K562 (cell line): ENCODE measurements at regions of chr3 and their contacts with region 1.

Region 1: DNA sequence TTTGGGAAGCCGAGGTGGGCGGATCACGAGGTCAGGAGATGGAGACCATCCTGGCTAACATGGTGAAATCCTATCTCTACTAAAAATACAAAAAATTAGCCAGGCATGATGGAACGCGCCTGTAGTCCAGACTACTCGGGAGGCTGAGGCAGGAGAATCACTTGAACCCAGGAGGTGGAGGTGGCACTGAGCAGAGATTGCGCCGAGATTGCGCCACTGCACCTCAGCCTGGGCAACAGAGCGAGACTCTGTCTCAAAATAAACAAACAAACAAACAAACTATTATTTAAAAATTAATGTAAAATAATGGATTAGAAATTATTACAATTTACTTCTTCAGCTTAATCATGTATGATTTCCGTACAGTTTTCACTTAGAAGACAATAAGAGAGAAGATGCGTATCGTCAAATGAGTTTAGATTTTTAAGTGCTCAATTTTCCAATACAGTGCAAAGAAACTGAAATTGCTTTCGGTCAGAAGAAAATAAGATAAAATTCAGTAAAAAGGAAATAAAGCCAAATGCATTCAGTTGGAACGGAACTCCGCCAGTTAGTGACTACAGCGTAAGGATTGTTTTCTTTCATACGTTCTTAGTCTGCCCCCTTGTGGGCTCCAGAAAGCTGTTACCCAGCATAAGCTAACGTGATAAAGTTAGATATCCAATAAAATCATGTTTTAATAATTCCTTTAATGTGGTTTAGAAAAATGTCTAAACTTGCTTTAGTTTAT is 24.8 kb downstream of the AADAC start:
- DNase-seq: peak; percentile 43 to 85 (median 50)
- ATAC-seq: peak; percentile 87
- H3K4me3 ChIP-seq: no peak overlapping the region
- H3K27ac ChIP-seq: no peak overlapping the region
- H3K4me1 ChIP-seq: peaks cover 0 to 16% of the 10 kb centered on the region in 2 experiments; a peak in 3 of 5 replicates
- H3K27me3 ChIP-seq: no peaks in the 10 kb centered on the region
- CTCF ChIP-seq: peak; percentile 57 to 85 (median 70); a peak in 5 of 6 replicates
- EP300 ChIP-seq: no peak
- POLR2A ChIP-seq: no peak
- RAD21 ChIP-seq: peak; percentile 91 to 95

Region 2: GRCh38 chr3:151168269-151169094 is 670.3 kb before region 1 on chr3:
- CTCF ChIA-PET with region 1: interaction called, 3 read pairs
- POLR2A ChIA-PET with region 1: no interaction called
- in situ Hi-C with region 1: no loop called
- intact Hi-C with region 1: loop called (anchors 2 kb)
- DNase-seq: peak; percentile 42 to 71 (median 52)
- ATAC-seq: peak; percentile 92
- H3K4me3 ChIP-seq: no peak overlapping the region
- H3K27ac ChIP-seq: no peak overlapping the region
- H3K4me1 ChIP-seq: no peaks in the 10 kb centered on the region
- H3K27me3 ChIP-seq: peaks cover 8 to 10% of the 10 kb centered on the region in 2 experiments; a peak in 3 of 5 replicates
- CTCF ChIP-seq: peak; percentile 76 to 79 (median 76)
- EP300 ChIP-seq: no peak
- POLR2A ChIP-seq: no peak
- RAD21 ChIP-seq: peak; percentile 69 to 80

Region 3: DNA sequence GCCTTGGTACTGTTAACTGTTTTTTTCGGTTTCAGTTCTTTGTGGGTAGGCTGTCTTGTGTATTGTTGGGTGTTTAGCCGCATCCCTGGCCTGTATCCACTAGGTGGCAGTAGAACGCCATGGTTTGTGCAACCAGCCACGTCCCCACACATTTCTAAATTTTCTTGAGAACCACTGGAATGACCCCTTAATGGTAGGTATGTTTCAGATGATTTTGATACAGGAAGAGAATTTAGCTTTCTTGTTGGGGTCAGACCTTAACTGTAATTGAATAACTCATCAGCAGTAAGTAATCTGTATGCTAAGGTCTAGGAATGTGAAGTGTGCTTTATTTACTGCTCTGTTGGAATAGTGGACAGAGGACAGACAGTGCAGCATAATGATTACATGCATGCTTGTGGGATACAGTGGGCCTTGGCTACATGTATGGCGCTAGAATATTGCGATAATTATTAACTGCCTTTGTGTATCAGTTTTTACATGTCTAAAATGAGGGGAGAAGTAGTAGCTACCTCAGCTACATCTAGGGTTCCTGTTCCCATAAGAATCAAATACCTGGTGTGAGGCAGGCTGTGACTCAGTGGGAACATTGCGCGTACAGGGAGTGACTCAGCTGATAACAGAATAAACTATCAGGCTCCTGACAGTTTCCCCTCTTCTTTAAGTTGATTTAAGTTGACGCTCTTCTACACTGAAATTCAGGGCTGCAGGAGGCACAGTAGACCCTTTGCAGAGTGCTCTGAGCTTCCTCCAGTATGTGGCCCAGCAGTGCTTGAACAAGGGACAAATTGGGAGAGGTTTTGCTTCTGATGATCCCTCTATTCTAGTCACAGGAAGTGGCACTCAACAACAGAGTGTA is 610.7 kb before region 1 on chr3:
- CTCF ChIA-PET with region 1: interaction called, 3 read pairs
- POLR2A ChIA-PET with region 1: no interaction called
- in situ Hi-C with region 1: loop called (anchors 25 kb)
- intact Hi-C with region 1: loop called (anchors 1 kb)
- DNase-seq: peak; percentile 76 to 81 (median 77)
- ATAC-seq: peak; percentile 94
- H3K4me3 ChIP-seq: no peak overlapping the region
- H3K27ac ChIP-seq: no peak overlapping the region
- H3K4me1 ChIP-seq: no peaks in the 10 kb centered on the region
- H3K27me3 ChIP-seq: peaks cover 5 to 9% of the 10 kb centered on the region in 2 experiments
- CTCF ChIP-seq: peak; percentile 81 to 90 (median 86)
- EP300 ChIP-seq: no peak
- POLR2A ChIP-seq: no peak
- RAD21 ChIP-seq: peak; percentile 86 to 92

Region 4: GRCh38 chr3:151290673-151291072 is 548.1 kb before region 1 on chr3:
- CTCF ChIA-PET with region 1: no interaction called
- POLR2A ChIA-PET with region 1: no interaction called
- in situ Hi-C with region 1: no loop called
- intact Hi-C with region 1: loop called (anchors 5 kb)
- DNase-seq: no peak
- ATAC-seq: no peak
- H3K4me3 ChIP-seq: no peak overlapping the region
- H3K27ac ChIP-seq: no peak overlapping the region
- H3K4me1 ChIP-seq: no peaks in the 10 kb centered on the region
- H3K27me3 ChIP-seq: peaks cover 15 to 16% of the 10 kb centered on the region in 2 experiments; a peak in 2 of 5 replicates
- CTCF ChIP-seq: peak in 2 of 3 experiments; percentile 16 to 37; a peak in 2 of 6 replicates
- EP300 ChIP-seq: no peak
- POLR2A ChIP-seq: no peak
- RAD21 ChIP-seq: peak; percentile 38 to 58; a peak in 3 of 4 replicates

Region 5: GRCh38 chr3:151439652-151440129 is 399.1 kb before region 1 on chr3:
- CTCF ChIA-PET with region 1: interaction called, 32 read pairs
- POLR2A ChIA-PET with region 1: no interaction called
- in situ Hi-C with region 1: loop called (anchors 5 kb)
- intact Hi-C with region 1: loop called (anchors 1 kb)
- DNase-seq: peak; percentile 40 to 67 (median 44)
- ATAC-seq: peak; percentile 91
- H3K4me3 ChIP-seq: no peak overlapping the region
- H3K27ac ChIP-seq: no peak overlapping the region
- H3K4me1 ChIP-seq: no peaks in the 10 kb centered on the region
- H3K27me3 ChIP-seq: no peaks in the 10 kb centered on the region; a peak in 1 of 5 replicates
- CTCF ChIP-seq: peak; percentile 54 to 75 (median 71); a peak in 5 of 6 replicates
- EP300 ChIP-seq: no peak
- POLR2A ChIP-seq: no peak
- RAD21 ChIP-seq: peak; percentile 83 to 91

Region 6: DNA sequence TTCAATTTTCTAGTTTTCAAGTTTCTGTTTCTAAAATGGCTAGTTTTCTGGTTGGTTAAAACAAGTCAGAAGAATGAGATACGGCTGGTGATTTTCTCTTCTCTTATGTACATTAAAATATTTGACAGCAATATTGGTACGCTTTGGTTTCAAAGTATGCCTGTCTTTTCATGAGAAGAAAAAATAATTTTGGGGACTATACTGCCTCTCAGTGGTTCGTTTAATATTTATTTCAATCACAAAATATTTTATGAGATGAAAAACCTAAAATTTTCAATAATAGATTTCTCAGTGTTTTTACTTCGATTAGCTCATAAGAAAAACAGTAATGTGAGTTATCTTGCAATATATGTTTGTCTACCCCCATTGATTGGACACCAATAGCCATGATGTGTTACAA is 177.9 kb before region 1 on chr3:
- CTCF ChIA-PET with region 1: no interaction called
- POLR2A ChIA-PET with region 1: no interaction called
- in situ Hi-C with region 1: no loop called
- intact Hi-C with region 1: loop called (anchors 5 kb)
- DNase-seq: no peak
- ATAC-seq: no peak
- H3K4me3 ChIP-seq: no peak overlapping the region
- H3K27ac ChIP-seq: no peak overlapping the region
- H3K4me1 ChIP-seq: no peaks in the 10 kb centered on the region
- H3K27me3 ChIP-seq: no peaks in the 10 kb centered on the region
- CTCF ChIP-seq: peak in 1 of 3 experiments; percentile 35; a peak in 2 of 6 replicates
- EP300 ChIP-seq: no peak
- POLR2A ChIP-seq: no peak
- RAD21 ChIP-seq: peak in 1 of 2 experiments; percentile 61; a peak in 3 of 4 replicates

Region 7: DNA sequence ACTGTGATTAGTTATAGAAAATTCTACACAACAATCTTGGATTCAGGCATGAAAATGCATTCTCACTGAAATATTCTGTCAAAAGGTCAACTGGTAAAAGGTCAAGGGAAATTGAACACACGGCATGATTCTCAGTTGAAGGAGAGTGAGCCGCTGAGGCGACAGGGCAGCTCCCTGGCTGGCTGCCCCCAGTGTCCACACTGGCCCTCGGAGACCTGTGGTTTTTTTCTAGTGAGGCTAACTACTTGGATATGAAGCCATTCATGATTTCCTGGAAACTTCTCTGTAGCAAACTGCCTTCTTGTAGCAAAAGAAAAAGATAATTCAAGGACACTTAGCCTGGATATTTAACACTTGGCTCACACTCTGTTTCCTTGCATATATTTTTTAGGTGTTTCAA is 67.8 kb before region 1 on chr3:
- CTCF ChIA-PET with region 1: no interaction called
- POLR2A ChIA-PET with region 1: no interaction called
- in situ Hi-C with region 1: no loop called
- intact Hi-C with region 1: no loop called
- DNase-seq: peak in 2 of 4 experiments; percentile 23 to 31
- ATAC-seq: peak; percentile 72
- H3K4me3 ChIP-seq: no peak overlapping the region
- H3K27ac ChIP-seq: peak overlapping the region; percentile 37; the same call in 1 of the 3 replicates
- H3K4me1 ChIP-seq: peaks cover 0 to 13% of the 10 kb centered on the region in 2 experiments; a peak in 1 of 5 replicates
- H3K27me3 ChIP-seq: no peaks in the 10 kb centered on the region
- CTCF ChIP-seq: no peak
- EP300 ChIP-seq: no peak
- POLR2A ChIP-seq: no peak
- RAD21 ChIP-seq: no peak